IMR-90 (cell line): ENCODE measurements at regions of chr2 and their contacts with region 1.

Region 1: DNA sequence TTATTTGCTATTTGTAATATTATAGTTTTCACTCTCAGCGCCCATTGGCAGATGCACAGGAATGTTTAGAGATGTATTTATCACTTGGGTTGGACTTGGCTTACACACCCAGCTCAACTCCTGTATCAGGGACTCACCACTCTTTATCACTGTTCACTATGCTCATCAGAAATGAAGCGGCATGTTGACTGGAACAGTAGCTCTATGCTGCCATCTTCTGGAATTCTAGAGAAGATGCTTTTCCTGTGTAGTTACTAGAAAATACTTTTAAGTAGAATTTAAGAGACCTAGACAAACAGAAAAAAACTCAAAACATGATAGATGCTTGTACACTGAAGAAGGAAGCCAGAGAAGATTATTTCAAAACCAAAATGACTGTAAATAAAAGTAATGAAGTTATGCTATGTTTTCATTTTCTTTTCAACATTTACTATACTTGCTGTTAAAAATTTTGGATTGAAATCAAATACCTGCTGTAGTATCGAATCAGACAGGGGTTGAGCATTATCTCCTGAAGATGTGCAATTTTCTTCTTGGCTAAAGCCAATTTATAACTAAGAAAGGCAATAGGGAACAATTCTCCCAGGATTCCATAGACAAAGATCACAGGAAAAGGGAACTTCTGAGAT is 47.4 kb upstream of the NXPH2 start:
- DNase-seq: peak; percentile 68
- ATAC-seq: peak; percentile 94
- H3K4me3 ChIP-seq: no peak overlapping the region
- H3K27ac ChIP-seq: no peak overlapping the region
- H3K4me1 ChIP-seq: no peaks in the 10 kb centered on the region
- H3K27me3 ChIP-seq: no peaks in the 10 kb centered on the region
- CTCF ChIP-seq: peak; percentile 72
- POLR2A ChIP-seq: no peak
- RAD21 ChIP-seq: peak; percentile 70

Region 2: DNA sequence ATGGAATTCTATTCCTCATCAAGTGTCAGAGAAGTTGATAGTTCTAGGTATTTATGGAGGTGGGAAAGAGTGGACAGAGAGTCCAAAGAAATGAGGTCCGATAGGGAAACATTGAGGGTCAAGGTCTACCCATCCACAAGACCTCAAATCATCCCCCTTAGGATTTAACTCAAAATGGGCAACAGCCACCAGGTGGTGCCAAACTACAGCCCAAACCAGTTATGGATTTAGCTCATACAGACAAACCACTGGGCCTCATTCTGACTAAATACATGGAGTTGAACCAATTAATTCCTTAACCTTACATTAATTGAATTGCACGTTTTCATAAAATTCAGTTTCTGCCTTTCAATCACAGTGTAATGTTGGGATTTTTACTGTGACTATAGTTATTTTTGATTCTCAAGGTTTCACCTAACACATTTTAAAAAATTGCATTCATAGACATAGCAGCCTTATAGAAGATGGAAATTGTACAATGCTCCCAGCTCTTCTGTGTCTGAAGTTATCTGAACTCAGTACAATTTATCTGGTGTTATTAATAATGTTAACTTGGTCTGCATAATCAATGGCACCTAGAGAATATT is 961.5 kb before region 1 on chr2:
- CTCF ChIA-PET with region 1: no interaction called
- POLR2A ChIA-PET with region 1: no interaction called
- dilution Hi-C with region 1: no loop called
- in situ Hi-C with region 1: no loop called
- intact Hi-C with region 1: loop called (anchors 2 kb)
- DNase-seq: peak; percentile 39
- ATAC-seq: peak; percentile 75
- H3K4me3 ChIP-seq: no peak overlapping the region
- H3K27ac ChIP-seq: no peak overlapping the region
- H3K4me1 ChIP-seq: no peaks in the 10 kb centered on the region
- H3K27me3 ChIP-seq: no peaks in the 10 kb centered on the region
- CTCF ChIP-seq: peak; percentile 57
- POLR2A ChIP-seq: no peak
- RAD21 ChIP-seq: peak; percentile 65

Region 3: GRCh38 chr2:137888845-137889244 is 938.7 kb before region 1 on chr2:
- CTCF ChIA-PET with region 1: interaction called, 8 read pairs
- POLR2A ChIA-PET with region 1: no interaction called
- dilution Hi-C with region 1: no loop called
- in situ Hi-C with region 1: loop called (anchors 25 kb)
- intact Hi-C with region 1: no loop called
- DNase-seq: no peak
- ATAC-seq: no peak
- H3K4me3 ChIP-seq: no peak overlapping the region
- H3K27ac ChIP-seq: no peak overlapping the region
- H3K4me1 ChIP-seq: no peaks in the 10 kb centered on the region
- H3K27me3 ChIP-seq: no peaks in the 10 kb centered on the region
- CTCF ChIP-seq: 0 out of 2 replicates have a peak, but pooled peaks have one; percentile 29
- POLR2A ChIP-seq: no peak
- RAD21 ChIP-seq: peak; percentile 38

Region 4: GRCh38 chr2:138244501-138244925 is 583.0 kb before region 1 on chr2:
- CTCF ChIA-PET with region 1: no interaction called
- POLR2A ChIA-PET with region 1: no interaction called
- dilution Hi-C with region 1: no loop called
- in situ Hi-C with region 1: no loop called
- intact Hi-C with region 1: no loop called
- DNase-seq: peak; percentile 7
- ATAC-seq: peak; percentile 27; the same call in 1 of the 2 replicates
- H3K4me3 ChIP-seq: no peak overlapping the region
- H3K27ac ChIP-seq: no peak overlapping the region
- H3K4me1 ChIP-seq: peaks cover 1% of the 10 kb centered on the region; the same call in 1 of the 2 replicates
- H3K27me3 ChIP-seq: no peaks in the 10 kb centered on the region
- CTCF ChIP-seq: no peak
- POLR2A ChIP-seq: no peak
- RAD21 ChIP-seq: no peak

Region 5: GRCh38 chr2:138699421-138699820 is 128.1 kb before region 1 on chr2:
- CTCF ChIA-PET with region 1: no interaction called
- POLR2A ChIA-PET with region 1: no interaction called
- dilution Hi-C with region 1: no loop called
- in situ Hi-C with region 1: no loop called
- intact Hi-C with region 1: no loop called
- DNase-seq: no peak
- ATAC-seq: no peak
- H3K4me3 ChIP-seq: no peak overlapping the region
- H3K27ac ChIP-seq: no peak overlapping the region
- H3K4me1 ChIP-seq: no peaks in the 10 kb centered on the region
- H3K27me3 ChIP-seq: no peaks in the 10 kb centered on the region; the same call in 1 of the 2 replicates
- CTCF ChIP-seq: no peak
- POLR2A ChIP-seq: no peak
- RAD21 ChIP-seq: no peak